HCT116 (cell line): ENCODE measurements at regions of chr15 and their contacts with region 1.

Region 1: GRCh38 chr15:90086868-90087268 is 15.4 kb downstream of the IDH2 start:
- DNase-seq: no peak
- ATAC-seq: peak; percentile 85
- H3K4me3 ChIP-seq: no peak overlapping the region
- H3K27ac ChIP-seq: no peak overlapping the region
- H3K4me1 ChIP-seq: peaks cover 0 to 13% of the 10 kb centered on the region in 2 experiments; a peak in 2 of 4 replicates
- H3K27me3 ChIP-seq: no peaks in the 10 kb centered on the region
- CTCF ChIP-seq: peak; percentile 83 to 95 (median 91)
- POLR2A ChIP-seq: no peak
- RAD21 ChIP-seq: peak; percentile 89

Region 2: GRCh38 chr15:89760303-89761008 is 326.4 kb before region 1 on chr15:
- CTCF ChIA-PET with region 1: interaction called, 11 read pairs
- POLR2A ChIA-PET with region 1: interaction called, 4 read pairs
- RAD21 ChIA-PET with region 1: interaction called in 1 of 2 experiments, 3 read pairs
- intact Hi-C with region 1: no loop called
- DNase-seq: peak; percentile 39
- ATAC-seq: peak; percentile 98
- H3K4me3 ChIP-seq: no peak overlapping the region
- H3K27ac ChIP-seq: no peak overlapping the region
- H3K4me1 ChIP-seq: peaks cover 0 to 10% of the 10 kb centered on the region in 2 experiments; a peak in 1 of 4 replicates
- H3K27me3 ChIP-seq: no peaks in the 10 kb centered on the region
- CTCF ChIP-seq: peak; percentile 94 to 99 (median 97)
- POLR2A ChIP-seq: no peak
- RAD21 ChIP-seq: peak; percentile 96

Region 3: DNA sequence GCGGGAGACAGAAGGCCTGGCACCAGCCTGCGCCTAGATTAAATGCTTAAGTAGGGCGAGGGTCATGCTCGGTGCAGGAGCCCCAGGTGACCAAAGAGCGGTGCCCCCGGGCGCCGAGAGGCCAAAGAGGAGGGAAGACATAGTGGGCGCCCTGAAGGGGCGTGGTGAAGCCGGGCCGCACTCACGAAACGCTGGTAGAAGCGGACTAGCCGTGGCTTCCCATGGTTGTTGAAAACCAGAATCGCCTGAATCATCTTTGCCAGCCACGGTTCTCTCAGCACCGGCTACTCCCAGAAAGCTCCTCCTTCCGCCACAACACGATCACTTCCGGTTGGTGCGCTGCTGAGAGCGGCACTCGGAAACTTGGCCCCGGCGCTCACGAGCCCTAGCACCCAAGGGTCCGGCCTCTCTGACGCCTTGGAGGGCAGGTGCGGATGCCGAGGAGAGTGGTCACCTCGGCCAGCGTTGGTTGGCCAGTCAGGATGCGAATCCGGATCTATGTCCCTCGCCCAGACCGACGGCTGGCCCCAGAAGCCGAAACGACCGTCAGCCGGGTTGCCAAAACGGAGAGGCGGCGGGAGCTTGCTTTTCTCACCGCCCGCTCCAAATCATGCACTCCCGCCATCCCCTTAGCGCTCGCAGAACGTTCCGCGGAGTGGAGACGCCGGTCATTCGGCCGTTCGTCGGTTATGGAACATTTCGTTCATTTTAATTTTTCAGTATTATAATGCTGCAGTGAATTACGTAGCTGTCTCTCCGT is 193.0 kb before region 1 on chr15 and contains the start of gene AP3S2:
- CTCF ChIA-PET with region 1: interaction called, 35 read pairs
- POLR2A ChIA-PET with region 1: no interaction called
- RAD21 ChIA-PET with region 1: interaction called, 3 read pairs
- intact Hi-C with region 1: loop called (anchors 1 kb)
- DNase-seq: peak; percentile 92
- ATAC-seq: peak; percentile 86
- H3K4me3 ChIP-seq: peak within 1 kb of the TSS; percentile 68 to 85
- H3K27ac ChIP-seq: peak within 1 kb of the TSS; percentile 74
- H3K4me1 ChIP-seq: peaks cover 0 to 16% of the 10 kb centered on the region in 2 experiments; a peak in 2 of 4 replicates
- H3K27me3 ChIP-seq: no peaks in the 10 kb centered on the region
- CTCF ChIP-seq: no peak
- POLR2A ChIP-seq: no peak
- RAD21 ChIP-seq: peak; percentile 17; the same call in 1 of the 2 replicates
- total RNA-seq, gene AP3S2: 23.3 TPM

Region 4: DNA sequence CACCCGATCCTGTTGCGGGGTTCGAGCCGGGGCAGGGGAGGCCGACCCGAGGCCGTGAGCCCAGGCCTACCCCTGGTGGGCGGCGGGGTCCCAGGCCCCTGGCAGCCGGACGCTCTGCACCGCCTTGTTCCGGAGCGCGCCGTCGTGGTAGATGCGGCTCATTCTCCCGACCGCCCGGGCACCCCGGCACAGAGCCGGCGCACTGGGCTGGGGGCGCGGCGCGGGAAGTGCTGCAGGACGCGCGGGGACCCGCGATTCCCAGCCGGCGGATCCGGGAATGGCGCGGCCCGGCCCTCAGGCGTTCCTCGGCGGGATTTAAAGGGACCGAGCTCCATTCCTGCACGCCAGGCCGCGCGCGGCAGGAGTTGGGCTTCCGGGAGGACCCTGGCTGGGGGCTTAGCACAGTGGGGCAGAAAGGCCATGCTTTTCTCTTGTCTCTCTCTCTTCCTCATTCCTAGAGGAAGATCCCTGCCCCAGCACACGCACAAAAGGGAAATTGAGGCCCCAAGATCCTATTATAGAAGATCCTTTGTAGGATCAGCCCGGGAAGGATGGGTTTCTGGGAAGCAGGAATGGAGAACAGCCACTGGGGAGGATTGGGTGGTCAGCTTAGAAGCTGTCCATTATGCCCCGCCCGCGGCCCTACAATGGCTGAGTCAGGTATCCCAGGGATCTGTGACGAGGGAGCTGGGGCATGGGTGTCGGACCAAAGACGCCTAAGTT is 174.0 kb before region 1 on chr15 and contains the start of gene ARPIN:
- CTCF ChIA-PET with region 1: interaction called, 5 read pairs
- POLR2A ChIA-PET with region 1: no interaction called
- RAD21 ChIA-PET with region 1: no interaction called
- intact Hi-C with region 1: loop called (anchors 5 kb)
- DNase-seq: no peak
- ATAC-seq: peak; percentile 69
- H3K4me3 ChIP-seq: peak within 1 kb of the TSS; percentile 63 to 77
- H3K27ac ChIP-seq: peak within 1 kb of the TSS; percentile 74
- H3K4me1 ChIP-seq: peaks cover 26 to 50% of the 10 kb centered on the region in 2 experiments
- H3K27me3 ChIP-seq: no peaks in the 10 kb centered on the region
- CTCF ChIP-seq: no peak
- POLR2A ChIP-seq: no peak
- RAD21 ChIP-seq: no peak
- total RNA-seq, gene ARPIN: 8.8 TPM

Region 5: DNA sequence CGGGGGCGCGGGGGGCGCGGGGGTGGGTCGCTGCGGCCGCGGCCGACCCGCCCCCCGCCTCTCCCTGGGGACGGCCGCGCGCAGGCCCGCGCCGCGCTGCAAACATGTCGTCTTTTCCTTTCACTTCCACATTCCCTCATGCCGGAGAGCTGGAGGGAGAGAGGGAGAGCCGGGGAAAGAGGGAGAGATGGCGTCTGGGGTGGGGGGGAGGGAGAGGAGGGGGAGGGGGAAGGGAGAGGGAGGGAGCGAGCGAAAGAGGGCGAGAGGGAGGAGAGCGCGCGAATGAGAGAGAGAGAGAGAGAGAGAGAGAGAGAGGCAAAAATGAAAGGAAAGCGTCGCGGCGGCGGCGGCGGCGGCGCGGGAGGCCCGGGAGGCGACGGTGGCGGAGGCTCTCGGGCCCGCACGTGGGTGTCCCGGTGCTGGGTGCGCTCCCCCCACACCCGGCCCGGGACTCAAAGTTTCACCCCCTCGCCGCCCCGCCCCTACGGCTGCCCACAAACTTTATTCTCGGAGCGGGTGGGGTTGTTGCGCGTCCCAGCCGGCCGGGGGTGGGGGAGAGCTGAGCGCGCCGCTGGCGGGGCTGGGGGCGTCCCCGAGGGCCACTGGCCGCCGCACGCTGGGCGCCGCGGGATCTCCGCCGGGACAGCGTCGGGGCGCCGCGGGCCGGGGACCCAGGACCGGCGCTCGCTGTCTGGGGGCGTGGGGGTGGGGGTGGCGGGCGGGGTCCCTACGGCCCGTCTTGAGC is 85.0 kb before region 1 on chr15:
- CTCF ChIA-PET with region 1: no interaction called
- POLR2A ChIA-PET with region 1: no interaction called
- RAD21 ChIA-PET with region 1: no interaction called
- intact Hi-C with region 1: no loop called
- DNase-seq: no peak
- ATAC-seq: peak; percentile 18
- H3K4me3 ChIP-seq: peak overlapping the region; percentile 66 to 72
- H3K27ac ChIP-seq: peak overlapping the region; percentile 59
- H3K4me1 ChIP-seq: peaks cover 52 to 84% of the 10 kb centered on the region in 2 experiments
- H3K27me3 ChIP-seq: no peaks in the 10 kb centered on the region
- CTCF ChIP-seq: no peak
- POLR2A ChIP-seq: peak; percentile 8
- RAD21 ChIP-seq: no peak

Region 6: DNA sequence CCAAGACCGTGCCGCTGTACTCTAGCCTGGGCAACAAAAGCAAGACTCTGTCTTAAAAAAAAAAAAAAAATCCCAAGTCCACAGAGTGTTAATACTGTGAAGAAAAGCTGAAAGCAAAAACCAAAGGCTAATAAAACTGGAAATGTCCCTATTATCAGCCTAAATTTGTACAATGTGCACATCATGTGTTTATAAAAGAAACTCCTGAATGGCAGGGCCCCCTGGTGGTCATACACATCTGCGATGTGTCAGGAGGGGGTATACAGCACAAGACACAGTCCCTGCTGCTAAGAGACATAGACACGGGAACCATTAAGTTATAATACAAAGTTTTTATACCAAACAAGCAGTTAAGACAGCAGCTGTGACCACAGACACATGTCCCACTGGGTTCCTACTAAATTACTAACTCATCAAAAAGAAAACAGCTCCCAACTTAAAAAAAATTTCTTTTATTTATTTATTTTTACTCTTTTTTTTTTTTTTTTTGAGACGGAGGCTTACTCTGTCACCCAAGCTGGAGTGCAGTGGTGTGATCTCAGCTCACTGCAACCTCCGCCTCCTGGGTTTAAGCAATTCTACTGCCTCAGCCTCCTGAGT is 15.6 kb before region 1 on chr15:
- CTCF ChIA-PET with region 1: interaction called, 29 read pairs
- POLR2A ChIA-PET with region 1: interaction called, 3 read pairs
- RAD21 ChIA-PET with region 1: interaction called in 1 of 2 experiments, 4 read pairs
- intact Hi-C with region 1: no loop called
- DNase-seq: peak; percentile 57
- ATAC-seq: peak; percentile 81
- H3K4me3 ChIP-seq: no peak overlapping the region
- H3K27ac ChIP-seq: no peak overlapping the region
- H3K4me1 ChIP-seq: peaks cover 16% of the 10 kb centered on the region in 2 experiments
- H3K27me3 ChIP-seq: no peaks in the 10 kb centered on the region
- CTCF ChIP-seq: peak; percentile 80 to 84 (median 83); a peak in 5 of 6 replicates
- POLR2A ChIP-seq: no peak
- RAD21 ChIP-seq: peak; percentile 88